MCF 10A (cell line): ENCODE measurements at regions of chr3 and their contacts with region 1.

Region 1: DNA sequence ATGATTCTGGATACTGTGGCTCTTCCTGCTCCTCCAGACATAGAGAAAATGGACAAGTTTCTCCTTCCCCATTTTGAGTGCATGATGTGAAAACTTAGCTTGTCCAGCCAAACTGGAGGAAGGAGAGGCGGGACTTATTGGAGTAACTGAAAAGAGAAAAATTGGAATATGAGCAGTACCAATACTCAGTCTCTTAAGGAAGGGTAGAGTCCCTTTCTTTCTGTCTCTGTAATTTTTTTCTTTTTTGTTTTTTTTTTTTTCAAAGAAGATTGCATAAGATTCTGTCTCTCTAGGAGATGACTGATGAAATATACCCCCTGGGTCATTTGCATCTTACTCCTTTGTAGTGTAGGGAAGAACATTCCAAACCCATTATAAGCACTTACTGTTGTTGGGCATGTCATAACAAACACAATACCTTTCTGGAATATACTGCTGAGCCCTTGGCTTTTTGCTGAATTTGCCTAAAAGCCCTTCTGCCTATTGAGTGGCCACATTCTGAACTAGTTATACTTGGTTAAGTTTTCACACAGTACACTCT is 498.1 kb upstream of the TPRG1 start:
- DNase-seq: peak; percentile 95
- H3K4me3 Mint-ChIP-seq: peak overlapping the region; percentile 43
- H3K27ac Mint-ChIP-seq: peak overlapping the region; percentile 89
- H3K4me1 Mint-ChIP-seq: peaks cover 38% of the 10 kb centered on the region
- H3K27me3 Mint-ChIP-seq: no peaks in the 10 kb centered on the region
- CTCF ChIP-seq: no peak

Region 2: GRCh38 chr3:188154014-188154808 is 519.5 kb before region 1 on chr3 and contains the start of gene LPP:
- CTCF ChIA-PET with region 1: no interaction called
- POLR2A ChIA-PET with region 1: interaction called, 10 read pairs
- intact Hi-C with region 1: loop called (anchors 10 kb)
- DNase-seq: peak; percentile 67
- H3K4me3 Mint-ChIP-seq: peak within 1 kb of the TSS; percentile 90
- H3K27ac Mint-ChIP-seq: peak within 1 kb of the TSS; percentile 96
- H3K4me1 Mint-ChIP-seq: peaks cover 42% of the 10 kb centered on the region
- H3K27me3 Mint-ChIP-seq: no peaks in the 10 kb centered on the region
- CTCF ChIP-seq: no peak
- total RNA-seq, gene LPP: 107 and 117 TPM in 2 replicates

Region 3: GRCh38 chr3:188472331-188472730 is 201.4 kb before region 1 on chr3:
- CTCF ChIA-PET with region 1: no interaction called
- POLR2A ChIA-PET with region 1: no interaction called
- intact Hi-C with region 1: no loop called
- DNase-seq: no peak
- H3K4me3 Mint-ChIP-seq: no peak overlapping the region
- H3K27ac Mint-ChIP-seq: no peak overlapping the region
- H3K4me1 Mint-ChIP-seq: peaks cover 5% of the 10 kb centered on the region
- H3K27me3 Mint-ChIP-seq: no peaks in the 10 kb centered on the region
- CTCF ChIP-seq: no peak

Region 4: DNA sequence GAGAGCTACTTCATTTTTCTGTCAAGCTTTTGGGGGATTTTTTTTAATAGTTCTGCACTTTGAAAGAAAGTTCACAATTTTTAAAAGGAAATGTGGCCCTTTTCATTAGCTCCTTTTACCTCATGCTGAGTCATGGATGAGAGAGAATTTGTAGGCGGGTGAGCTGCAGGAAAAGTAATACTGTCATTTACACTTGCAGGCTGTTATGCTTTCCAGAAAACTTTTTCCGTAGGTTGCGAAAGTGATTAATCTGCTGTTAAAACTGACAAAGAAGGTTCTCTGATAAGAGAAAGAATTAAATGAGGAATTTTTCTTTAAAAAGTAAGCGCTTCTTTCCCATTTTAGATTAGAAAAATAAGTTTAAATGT is 89.6 kb before region 1 on chr3:
- CTCF ChIA-PET with region 1: no interaction called
- POLR2A ChIA-PET with region 1: interaction called, 27 read pairs
- intact Hi-C with region 1: no loop called
- DNase-seq: peak; percentile 78
- H3K4me3 Mint-ChIP-seq: peak overlapping the region; percentile 62
- H3K27ac Mint-ChIP-seq: no peak overlapping the region
- H3K4me1 Mint-ChIP-seq: peaks cover 26% of the 10 kb centered on the region
- H3K27me3 Mint-ChIP-seq: no peaks in the 10 kb centered on the region
- CTCF ChIP-seq: no peak

Region 5: DNA sequence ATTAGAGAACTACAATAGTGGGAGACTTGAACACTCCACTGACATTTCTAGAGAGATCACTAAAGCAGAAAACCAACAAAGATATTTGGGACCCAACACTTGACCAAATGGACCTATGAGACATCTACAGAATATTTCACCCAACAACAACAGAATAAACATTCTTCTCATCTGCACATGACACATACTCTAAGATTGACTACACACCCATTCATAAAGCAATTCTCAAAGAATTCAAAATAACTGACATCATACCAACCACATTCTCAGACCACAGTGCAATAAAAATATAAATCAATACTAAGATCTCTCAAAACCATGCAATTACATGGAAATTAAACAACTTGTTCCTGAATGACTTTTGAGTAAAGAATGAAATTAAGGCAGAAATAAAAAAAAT is 46.1 kb before region 1 on chr3:
- CTCF ChIA-PET with region 1: interaction called, 3 read pairs
- POLR2A ChIA-PET with region 1: interaction called, 6 read pairs
- intact Hi-C with region 1: loop called (anchors 1 kb)
- DNase-seq: peak; percentile 41
- H3K4me3 Mint-ChIP-seq: no peak overlapping the region
- H3K27ac Mint-ChIP-seq: peak overlapping the region; percentile 85
- H3K4me1 Mint-ChIP-seq: peaks cover 37% of the 10 kb centered on the region
- H3K27me3 Mint-ChIP-seq: no peaks in the 10 kb centered on the region
- CTCF ChIP-seq: no peak

Region 6: DNA sequence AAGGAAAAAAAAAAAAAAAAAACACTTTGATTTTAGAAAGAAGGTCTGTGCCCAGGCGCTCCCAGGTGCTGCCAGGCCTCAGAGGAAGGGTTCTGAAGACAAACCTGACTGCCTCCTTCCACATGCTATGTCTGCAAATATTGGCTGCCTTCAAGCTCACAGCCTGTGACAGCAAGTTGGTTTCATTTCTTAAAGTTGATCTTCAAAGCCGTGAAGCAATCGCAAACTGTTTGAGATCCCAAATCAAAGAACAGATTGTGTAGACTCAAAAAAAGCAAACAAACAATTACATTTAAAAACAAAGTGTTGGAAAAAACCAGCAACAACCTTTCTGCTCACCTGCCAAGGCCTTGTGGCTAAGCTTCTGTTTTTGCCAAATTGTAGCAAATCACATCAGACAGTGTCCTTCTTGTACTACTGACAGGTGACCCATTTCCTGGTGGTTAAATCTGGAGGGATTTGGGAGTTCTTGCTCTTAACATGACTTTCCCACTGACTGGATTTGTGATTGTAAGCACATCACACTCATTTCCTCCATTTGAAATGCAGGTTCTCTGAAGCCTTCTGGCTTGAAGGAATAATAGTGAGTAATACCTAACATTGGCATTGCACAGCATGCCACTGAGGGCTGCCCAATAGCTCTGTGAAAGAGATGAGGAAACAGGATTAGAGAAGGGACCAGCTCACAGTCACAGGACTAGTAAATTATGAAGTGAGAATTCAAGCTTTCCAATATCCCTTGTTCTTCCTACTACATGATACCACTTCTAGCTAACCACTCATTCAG is 17.3 kb before region 1 on chr3:
- CTCF ChIA-PET with region 1: interaction called, 3 read pairs
- POLR2A ChIA-PET with region 1: interaction called, 31 read pairs
- intact Hi-C with region 1: no loop called
- DNase-seq: peak; percentile 54
- H3K4me3 Mint-ChIP-seq: no peak overlapping the region
- H3K27ac Mint-ChIP-seq: no peak overlapping the region
- H3K4me1 Mint-ChIP-seq: peaks cover 7% of the 10 kb centered on the region
- H3K27me3 Mint-ChIP-seq: no peaks in the 10 kb centered on the region
- CTCF ChIP-seq: no peak

Region 7: DNA sequence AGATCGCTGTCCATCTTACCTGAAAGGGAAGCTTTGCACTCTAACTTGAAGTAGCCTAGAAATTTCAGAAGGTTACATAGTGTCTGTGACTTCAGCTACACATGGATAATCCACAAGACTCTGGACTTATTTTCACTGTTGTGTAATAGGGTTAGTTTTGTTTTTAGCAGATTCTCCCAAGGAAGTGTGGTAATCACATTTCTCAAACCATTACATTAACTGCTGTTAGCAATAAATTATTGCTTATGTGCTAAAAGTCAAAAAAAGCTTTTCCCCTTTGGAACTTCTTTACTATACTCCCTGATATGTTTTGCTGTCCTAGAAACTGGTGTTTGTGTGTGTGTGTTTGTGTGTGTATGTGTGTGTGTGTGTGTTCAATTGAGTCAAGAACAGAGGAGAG is 146.2 kb after region 1 on chr3:
- CTCF ChIA-PET with region 1: no interaction called
- POLR2A ChIA-PET with region 1: interaction called, 10 read pairs
- intact Hi-C with region 1: no loop called
- DNase-seq: peak; percentile 47
- H3K4me3 Mint-ChIP-seq: no peak overlapping the region
- H3K27ac Mint-ChIP-seq: peak overlapping the region; percentile 85
- H3K4me1 Mint-ChIP-seq: peaks cover 35% of the 10 kb centered on the region
- H3K27me3 Mint-ChIP-seq: no peaks in the 10 kb centered on the region
- CTCF ChIP-seq: no peak

Region 8: DNA sequence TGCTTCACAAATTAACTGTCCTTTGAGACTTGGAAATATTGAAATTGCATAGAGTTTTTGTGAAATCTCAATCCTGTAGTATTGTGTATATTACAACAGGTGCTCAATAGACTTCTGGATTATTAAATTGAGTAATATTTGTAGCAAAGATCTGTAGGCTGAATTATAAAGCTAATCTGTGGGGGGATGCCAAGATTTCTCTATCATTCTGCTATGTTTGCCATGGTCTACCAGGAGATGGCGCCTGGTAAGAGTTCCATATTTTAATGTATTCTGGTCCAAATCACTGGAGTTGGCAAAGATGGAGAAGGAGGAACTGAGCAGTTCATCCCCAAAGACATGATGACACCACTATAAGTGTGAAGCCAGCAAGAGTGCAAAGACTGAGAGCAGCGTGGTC is 157.2 kb after region 1 on chr3:
- CTCF ChIA-PET with region 1: no interaction called
- POLR2A ChIA-PET with region 1: interaction called, 19 read pairs
- intact Hi-C with region 1: no loop called
- DNase-seq: peak; percentile 45
- H3K4me3 Mint-ChIP-seq: no peak overlapping the region
- H3K27ac Mint-ChIP-seq: no peak overlapping the region
- H3K4me1 Mint-ChIP-seq: peaks cover 21% of the 10 kb centered on the region
- H3K27me3 Mint-ChIP-seq: no peaks in the 10 kb centered on the region
- CTCF ChIP-seq: no peak